Endothelial cell of umbilical vein (primary cell): ENCODE measurements at regions of chr19 and their contacts with region 1.

Region 1: GRCh38 chr19:49097455-49098288 is 12.4 kb downstream of the SNRNP70 start:
- DNase-seq: peak; percentile 74
- H3K4me3 ChIP-seq: no peak overlapping the region
- H3K27ac ChIP-seq: no peak overlapping the region
- H3K4me1 ChIP-seq: no peaks in the 10 kb centered on the region
- H3K27me3 ChIP-seq: no peaks in the 10 kb centered on the region
- CTCF ChIP-seq: peak; percentile 96 to 98
- POLR2A ChIP-seq: no peak

Region 2: DNA sequence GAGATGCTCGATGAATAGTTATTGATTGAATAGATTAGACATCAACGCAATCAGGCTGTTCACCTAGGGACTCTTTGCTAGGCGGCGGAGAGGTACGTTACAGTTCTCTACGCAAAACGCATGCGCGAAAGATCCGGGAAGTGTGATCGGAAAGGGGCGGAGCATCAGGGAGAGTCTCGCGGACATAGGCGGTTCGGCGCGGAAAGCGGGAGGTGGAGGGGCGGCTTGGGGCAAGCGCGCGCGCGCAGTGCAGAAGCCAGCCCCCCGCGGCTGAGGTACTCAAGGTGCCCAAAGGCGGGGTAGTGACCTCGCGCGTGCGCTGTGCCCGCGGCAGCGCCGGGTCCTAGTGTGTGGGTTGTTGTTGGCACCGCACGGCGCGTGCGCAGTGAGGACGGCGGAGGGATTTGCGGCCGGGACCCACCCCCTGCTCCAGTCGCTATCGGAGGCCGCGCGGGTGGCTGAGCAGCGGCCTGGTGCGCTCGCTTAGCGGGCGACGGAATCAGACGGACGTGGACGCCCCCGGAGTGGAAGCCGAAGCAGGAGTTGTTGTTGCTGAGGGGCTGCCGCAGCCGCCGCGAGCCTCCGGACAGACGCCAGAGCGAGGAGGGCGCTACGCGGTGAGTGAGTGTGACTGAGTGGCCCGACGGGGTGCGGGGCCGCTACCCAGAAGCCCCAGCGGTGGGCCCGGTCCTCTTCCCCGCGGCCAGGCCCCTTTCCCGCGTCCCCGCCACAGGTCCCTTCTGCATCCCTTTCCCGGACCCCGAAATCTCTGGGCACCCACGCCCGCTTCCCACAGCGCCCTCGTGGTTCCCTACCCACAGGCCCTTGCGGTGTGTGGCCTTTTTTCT is 12.4 kb before region 1 on chr19 and contains the start of gene SNRNP70:
- CTCF ChIA-PET with region 1: interaction called, 24 read pairs
- POLR2A ChIA-PET with region 1: no interaction called
- dilution Hi-C with region 1: no loop called
- intact Hi-C with region 1: no loop called
- DNase-seq: peak; percentile 99
- H3K4me3 ChIP-seq: peak within 1 kb of the TSS; percentile 75 to 93 (median 89)
- H3K27ac ChIP-seq: peak within 1 kb of the TSS; percentile 73
- H3K4me1 ChIP-seq: peaks cover 14% of the 10 kb centered on the region
- H3K27me3 ChIP-seq: peaks cover 2 to 3% of the 10 kb centered on the region in 2 experiments
- CTCF ChIP-seq: no peak
- POLR2A ChIP-seq: peak; percentile 95
- total RNA-seq, gene SNRNP70: 215 and 228 TPM in 2 replicates

Region 3: DNA sequence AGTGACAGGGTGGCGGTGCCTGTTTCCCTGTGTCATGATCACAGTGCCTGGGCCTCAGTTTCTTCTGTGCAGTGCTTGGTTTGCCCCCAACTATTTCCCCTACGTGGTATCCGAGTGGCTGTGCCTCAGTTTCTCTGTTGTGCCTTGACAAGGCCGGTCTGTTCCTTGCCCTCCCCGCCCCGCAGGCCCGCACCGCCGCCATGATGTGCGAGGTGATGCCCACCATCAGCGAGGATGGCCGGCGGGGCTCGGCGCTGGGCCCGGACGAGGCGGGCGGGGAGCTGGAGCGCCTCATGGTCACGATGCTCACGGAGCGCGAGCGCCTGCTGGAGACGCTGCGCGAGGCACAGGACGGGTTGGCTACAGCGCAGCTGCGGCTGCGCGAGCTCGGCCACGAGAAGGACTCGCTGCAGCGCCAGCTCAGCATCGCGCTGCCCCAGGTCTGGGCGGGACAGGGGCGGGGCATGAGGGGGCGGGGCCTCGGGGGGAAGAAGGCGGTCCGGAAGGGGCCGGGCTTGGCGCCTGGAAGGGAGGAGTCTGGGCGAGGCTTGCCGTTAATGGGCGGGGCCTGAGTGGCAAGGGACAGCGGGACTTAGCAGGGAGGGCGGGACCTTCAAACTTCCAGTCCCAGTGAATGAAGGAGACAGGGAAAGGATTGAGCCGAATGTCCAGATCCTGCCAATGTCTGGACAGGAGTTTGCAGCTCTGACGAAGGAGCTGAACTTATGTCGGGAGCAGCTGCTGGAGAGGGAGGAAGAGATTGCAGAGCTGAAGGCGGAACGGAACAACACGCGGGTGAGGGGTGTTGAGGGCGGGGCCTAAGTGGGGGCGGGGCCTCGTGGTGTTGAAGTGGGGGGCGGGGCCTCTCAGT is 30.2 kb after region 1 on chr19:
- CTCF ChIA-PET with region 1: interaction called, 15 read pairs
- POLR2A ChIA-PET with region 1: no interaction called
- dilution Hi-C with region 1: no loop called
- intact Hi-C with region 1: no loop called
- DNase-seq: peak; percentile 98
- H3K4me3 ChIP-seq: no peak overlapping the region
- H3K27ac ChIP-seq: no peak overlapping the region
- H3K4me1 ChIP-seq: no peaks in the 10 kb centered on the region
- H3K27me3 ChIP-seq: peaks cover 0 to 4% of the 10 kb centered on the region in 2 experiments
- CTCF ChIP-seq: peak in 1 of 2 donors; percentile 38
- POLR2A ChIP-seq: no peak

Region 4: GRCh38 chr19:49148784-49149651 is 51.3 kb after region 1 on chr19:
- CTCF ChIA-PET with region 1: interaction called, 56 read pairs
- POLR2A ChIA-PET with region 1: interaction called, 4 read pairs
- dilution Hi-C with region 1: no loop called
- intact Hi-C with region 1: loop called (anchors 1 kb)
- DNase-seq: peak; percentile 91
- H3K4me3 ChIP-seq: peak overlapping the region; percentile 31 to 73 (median 61)
- H3K27ac ChIP-seq: no peak overlapping the region
- H3K4me1 ChIP-seq: peaks cover 28% of the 10 kb centered on the region
- H3K27me3 ChIP-seq: peaks cover 2 to 5% of the 10 kb centered on the region in 2 experiments
- CTCF ChIP-seq: no peak
- POLR2A ChIP-seq: no peak

Region 5: DNA sequence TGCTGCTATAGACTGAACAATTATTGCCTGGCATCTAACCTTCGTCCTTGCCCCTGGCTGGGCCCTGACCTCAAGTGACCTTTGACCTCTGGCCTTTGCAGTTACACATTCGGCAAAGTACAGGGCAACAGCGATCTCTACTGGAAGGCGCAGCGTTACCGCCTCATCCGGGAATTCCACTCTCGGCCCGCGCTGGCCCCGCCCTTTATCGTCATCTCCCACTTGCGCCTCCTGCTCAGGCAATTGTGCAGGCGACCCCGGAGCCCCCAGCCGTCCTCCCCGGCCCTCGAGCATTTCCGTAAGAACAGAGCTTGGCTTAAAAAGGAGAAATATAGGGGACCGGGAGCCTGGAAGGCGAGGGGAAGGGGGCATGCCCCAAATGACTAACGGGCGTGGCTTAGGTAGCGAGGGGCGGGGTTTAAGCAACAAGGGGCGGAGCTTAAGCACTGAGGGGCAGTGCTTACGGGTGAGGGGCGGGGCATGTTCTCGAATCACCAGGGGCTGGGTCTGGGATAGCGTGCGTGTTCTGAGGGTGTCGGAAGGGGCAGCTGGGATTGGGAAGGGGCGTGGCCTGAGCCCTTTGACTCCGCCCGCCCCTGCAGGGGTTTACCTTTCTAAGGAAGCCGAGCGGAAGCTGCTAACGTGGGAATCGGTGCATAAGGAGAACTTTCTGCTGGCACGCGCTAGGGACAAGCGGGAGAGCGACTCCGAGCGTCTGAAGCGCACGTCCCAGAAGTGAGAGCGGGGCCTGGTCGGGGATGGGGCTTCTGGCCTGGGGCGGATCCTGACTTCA is 112.6 kb after region 1 on chr19:
- CTCF ChIA-PET with region 1: interaction called, 85 read pairs
- POLR2A ChIA-PET with region 1: no interaction called
- dilution Hi-C with region 1: no loop called
- intact Hi-C with region 1: loop called (anchors 1 kb)
- DNase-seq: peak; percentile 9
- H3K4me3 ChIP-seq: no peak overlapping the region
- H3K27ac ChIP-seq: no peak overlapping the region
- H3K4me1 ChIP-seq: no peaks in the 10 kb centered on the region
- H3K27me3 ChIP-seq: no peaks in the 10 kb centered on the region
- CTCF ChIP-seq: no peak
- POLR2A ChIP-seq: no peak

Region 6: GRCh38 chr19:49224856-49225255 is 127.2 kb after region 1 on chr19:
- CTCF ChIA-PET with region 1: interaction called, 42 read pairs
- POLR2A ChIA-PET with region 1: no interaction called
- dilution Hi-C with region 1: no loop called
- intact Hi-C with region 1: loop called (anchors 1 kb)
- DNase-seq: peak; percentile 80
- H3K4me3 ChIP-seq: no peak overlapping the region
- H3K27ac ChIP-seq: no peak overlapping the region
- H3K4me1 ChIP-seq: no peaks in the 10 kb centered on the region
- H3K27me3 ChIP-seq: no peaks in the 10 kb centered on the region
- CTCF ChIP-seq: peak; percentile 51 to 66
- POLR2A ChIP-seq: no peak

Region 7: DNA sequence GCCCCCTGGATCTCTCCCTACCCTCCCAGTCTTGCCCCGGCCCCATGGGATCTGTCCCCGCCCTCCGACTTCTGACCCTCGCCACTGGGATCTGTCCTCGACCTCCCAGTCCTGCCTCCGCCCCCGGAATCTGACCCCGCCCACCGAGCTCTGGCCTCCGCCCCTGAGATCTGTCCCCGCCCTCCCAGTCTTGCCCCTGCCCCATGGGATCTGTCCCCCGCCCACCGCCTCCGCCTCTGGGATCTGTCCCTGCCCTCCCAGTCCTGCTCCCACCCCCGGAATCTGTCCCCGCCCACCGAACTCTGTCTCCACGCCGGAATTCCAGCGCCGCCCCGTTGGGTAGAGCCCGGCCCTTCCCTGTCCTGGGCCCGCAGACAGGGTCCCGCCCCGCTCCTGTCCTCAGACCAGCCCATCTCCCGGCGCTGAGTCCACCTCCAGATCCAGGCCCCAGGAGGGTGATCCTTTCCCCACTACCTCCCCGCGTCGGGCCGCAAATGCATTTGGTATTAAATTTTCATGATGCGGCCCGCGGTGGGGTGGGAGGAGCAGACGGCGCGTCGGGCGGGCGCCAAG is 345.2 kb after region 1 on chr19:
- CTCF ChIA-PET with region 1: no interaction called
- POLR2A ChIA-PET with region 1: no interaction called
- dilution Hi-C with region 1: no loop called
- intact Hi-C with region 1: no loop called
- DNase-seq: peak; percentile 83
- H3K4me3 ChIP-seq: peak overlapping the region; percentile 58 to 78 (median 65)
- H3K27ac ChIP-seq: no peak overlapping the region
- H3K4me1 ChIP-seq: no peaks in the 10 kb centered on the region
- H3K27me3 ChIP-seq: peaks cover 35 to 43% of the 10 kb centered on the region in 2 experiments
- CTCF ChIP-seq: no peak
- POLR2A ChIP-seq: no peak